Endothelial cell of umbilical vein (primary cell): ENCODE measurements at regions of chr9 and their contacts with region 1.

Region 1: GRCh38 chr9:74952281-74953151 is at the start of gene C9orf40:
- DNase-seq: peak; percentile 86
- H3K4me3 ChIP-seq: peak within 1 kb of the TSS; percentile 60 to 91 (median 61)
- H3K27ac ChIP-seq: peak within 1 kb of the TSS; percentile 54
- H3K4me1 ChIP-seq: peaks cover 4% of the 10 kb centered on the region
- H3K27me3 ChIP-seq: no peaks in the 10 kb centered on the region
- CTCF ChIP-seq: peak; percentile 86 to 93
- POLR2A ChIP-seq: no peak
- total RNA-seq, gene C9orf40: 5.1 and 7.5 TPM in 2 replicates

Region 2: GRCh38 chr9:74887041-74887980 is 65.2 kb before region 1 on chr9 and contains the start of gene TRPM6:
- CTCF ChIA-PET with region 1: interaction called, 10 read pairs
- POLR2A ChIA-PET with region 1: interaction called, 4 read pairs
- dilution Hi-C with region 1: no loop called
- intact Hi-C with region 1: loop called (anchors 2 kb)
- DNase-seq: peak; percentile 48
- H3K4me3 ChIP-seq: peak within 1 kb of the TSS; percentile 51 to 59 (median 53)
- H3K27ac ChIP-seq: no peak within 1 kb of the TSS
- H3K4me1 ChIP-seq: peaks cover 6% of the 10 kb centered on the region
- H3K27me3 ChIP-seq: peaks cover 2 to 12% of the 10 kb centered on the region in 2 experiments
- CTCF ChIP-seq: no peak
- POLR2A ChIP-seq: no peak
- total RNA-seq, gene TRPM6: 0.12 and 0.22 TPM in 2 replicates

Region 3: DNA sequence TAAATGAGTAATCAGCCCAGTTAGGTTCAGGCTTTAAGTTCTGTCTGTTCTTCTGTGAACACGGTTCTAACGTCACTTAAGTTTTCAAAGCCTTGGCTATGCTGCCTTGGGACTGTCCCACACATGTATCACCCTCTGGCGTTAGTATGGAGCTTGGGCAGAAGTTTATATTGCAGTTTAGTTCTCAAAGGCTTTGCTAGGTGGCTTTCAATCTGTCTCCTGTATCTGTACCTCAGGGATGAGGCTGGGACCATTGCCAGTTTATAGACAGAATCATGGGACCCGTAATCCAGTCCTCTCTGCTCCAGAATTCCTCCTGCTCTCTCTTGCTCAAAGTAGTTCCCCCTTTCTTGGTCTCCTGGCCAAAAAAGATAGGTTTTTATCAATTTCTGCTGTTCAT is 11.9 kb before region 1 on chr9:
- CTCF ChIA-PET with region 1: interaction called, 12 read pairs
- POLR2A ChIA-PET with region 1: no interaction called
- dilution Hi-C with region 1: no loop called
- intact Hi-C with region 1: no loop called
- DNase-seq: peak; percentile 10
- H3K4me3 ChIP-seq: no peak overlapping the region
- H3K27ac ChIP-seq: no peak overlapping the region
- H3K4me1 ChIP-seq: peaks cover 6% of the 10 kb centered on the region
- H3K27me3 ChIP-seq: no peaks in the 10 kb centered on the region
- CTCF ChIP-seq: no peak
- POLR2A ChIP-seq: no peak

Region 4: DNA sequence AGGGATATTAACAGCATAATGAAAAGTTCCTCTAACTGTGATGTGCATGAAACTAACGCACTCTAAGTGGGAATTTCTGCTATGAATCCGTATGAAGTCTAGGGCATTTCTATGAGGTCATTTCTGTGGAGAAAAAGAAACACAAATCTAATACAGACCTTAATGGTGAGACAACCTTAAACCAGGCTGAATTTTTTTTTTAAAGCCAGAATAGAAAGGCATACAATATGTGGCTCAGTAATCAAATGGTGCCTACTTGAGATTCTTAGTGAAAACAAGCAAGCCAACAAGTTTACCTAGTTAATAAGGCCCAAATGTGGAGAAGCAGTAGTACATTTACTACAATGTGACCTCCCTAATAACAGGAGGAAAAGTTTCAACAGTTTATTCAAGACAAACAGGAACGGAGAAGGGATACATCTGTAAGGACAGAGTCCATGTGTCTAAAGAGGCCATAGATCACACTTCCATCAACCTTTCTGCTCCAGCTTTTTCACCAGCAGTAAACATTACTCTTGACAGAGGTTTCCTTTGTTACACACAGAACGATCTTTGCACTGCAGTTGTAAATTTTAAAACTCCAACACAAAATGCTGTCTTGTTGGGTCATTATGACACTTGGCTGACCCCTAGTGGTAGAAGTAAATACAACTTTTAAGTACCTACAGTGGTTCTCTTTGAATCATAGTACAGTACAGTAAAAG is 49.4 kb after region 1 on chr9:
- CTCF ChIA-PET with region 1: interaction called, 14 read pairs
- POLR2A ChIA-PET with region 1: no interaction called
- dilution Hi-C with region 1: no loop called
- intact Hi-C with region 1: loop called (anchors 1 kb)
- DNase-seq: peak; percentile 82
- H3K4me3 ChIP-seq: no peak overlapping the region
- H3K27ac ChIP-seq: peak overlapping the region; percentile 18
- H3K4me1 ChIP-seq: peaks cover 2% of the 10 kb centered on the region
- H3K27me3 ChIP-seq: no peaks in the 10 kb centered on the region
- CTCF ChIP-seq: peak; percentile 53 to 56
- POLR2A ChIP-seq: no peak

Region 5: DNA sequence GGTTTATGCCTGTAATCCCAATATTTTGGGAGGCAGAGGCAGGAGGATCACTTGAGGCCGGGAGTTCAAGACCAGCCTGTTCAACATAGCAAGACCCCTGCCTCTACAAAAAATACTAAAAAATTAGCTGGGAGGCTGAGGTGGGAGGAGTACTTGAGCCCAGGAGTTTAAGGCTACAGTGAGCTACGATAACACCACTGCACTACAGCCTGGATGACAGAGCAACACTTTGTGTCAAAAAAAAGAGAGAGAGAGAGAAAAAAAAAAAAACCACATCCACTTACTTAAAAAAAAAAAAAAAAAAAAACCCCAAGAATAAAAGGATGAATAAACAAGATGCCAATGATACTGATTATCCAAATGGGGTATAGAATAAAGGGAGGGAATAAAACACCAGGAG is 61.2 kb after region 1 on chr9:
- CTCF ChIA-PET with region 1: no interaction called
- POLR2A ChIA-PET with region 1: no interaction called
- dilution Hi-C with region 1: no loop called
- intact Hi-C with region 1: no loop called
- DNase-seq: no peak
- H3K4me3 ChIP-seq: no peak overlapping the region
- H3K27ac ChIP-seq: no peak overlapping the region
- H3K4me1 ChIP-seq: no peaks in the 10 kb centered on the region
- H3K27me3 ChIP-seq: no peaks in the 10 kb centered on the region
- CTCF ChIP-seq: no peak
- POLR2A ChIP-seq: no peak

Region 6: DNA sequence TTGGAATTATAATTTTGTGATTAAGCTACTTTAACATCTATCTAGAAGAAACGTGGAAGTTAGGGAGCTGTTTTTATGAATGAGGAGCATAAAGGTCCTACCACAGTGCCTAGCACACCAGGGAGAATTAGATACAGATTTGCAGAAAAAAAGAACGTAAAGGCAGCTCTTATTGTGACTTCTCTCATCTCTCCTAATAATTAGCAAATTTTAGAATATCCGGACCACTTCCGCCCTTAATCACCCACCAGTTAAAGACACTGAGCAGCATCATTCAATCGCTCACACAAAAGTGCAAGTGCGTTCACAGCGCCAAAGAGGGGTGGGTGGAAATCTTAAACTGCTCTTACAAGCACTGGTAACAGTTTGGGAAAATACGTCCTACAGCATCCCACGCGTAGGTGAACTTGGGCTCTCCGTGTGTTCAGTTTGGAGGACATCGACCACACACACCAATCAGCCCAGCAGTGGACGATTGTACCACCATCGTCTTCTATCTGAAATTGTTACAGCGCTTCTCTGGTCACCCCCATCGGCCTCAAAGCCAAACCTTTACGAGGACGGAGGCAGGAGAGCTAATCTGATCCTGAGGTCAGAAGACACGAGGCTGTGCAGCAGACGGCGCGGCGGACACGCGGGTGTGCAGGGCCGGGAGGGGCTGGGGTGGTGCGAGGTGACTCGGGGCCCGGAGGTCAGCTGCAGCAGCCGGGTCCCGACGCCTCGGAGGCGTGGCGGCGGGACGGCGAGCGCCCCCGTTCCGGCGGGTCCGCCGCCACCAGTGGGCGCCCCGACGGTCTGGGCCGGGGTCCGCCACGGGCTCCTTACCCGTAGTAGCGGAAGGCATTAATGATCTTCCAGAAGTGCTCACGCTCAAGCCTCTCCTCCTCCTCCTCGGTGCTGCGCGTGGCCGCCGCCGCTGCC is 74.9 kb after region 1 on chr9:
- CTCF ChIA-PET with region 1: interaction called, 27 read pairs
- POLR2A ChIA-PET with region 1: interaction called, 7 read pairs
- dilution Hi-C with region 1: no loop called
- intact Hi-C with region 1: loop called (anchors 1 kb)
- DNase-seq: peak; percentile 53
- H3K4me3 ChIP-seq: peak overlapping the region; percentile 15 to 68 (median 61)
- H3K27ac ChIP-seq: peak overlapping the region; percentile 43
- H3K4me1 ChIP-seq: peaks cover 9% of the 10 kb centered on the region
- H3K27me3 ChIP-seq: peaks cover 1 to 2% of the 10 kb centered on the region in 2 experiments
- CTCF ChIP-seq: peak in 1 of 2 donors; percentile 21
- POLR2A ChIP-seq: peak; percentile 10

Region 7: DNA sequence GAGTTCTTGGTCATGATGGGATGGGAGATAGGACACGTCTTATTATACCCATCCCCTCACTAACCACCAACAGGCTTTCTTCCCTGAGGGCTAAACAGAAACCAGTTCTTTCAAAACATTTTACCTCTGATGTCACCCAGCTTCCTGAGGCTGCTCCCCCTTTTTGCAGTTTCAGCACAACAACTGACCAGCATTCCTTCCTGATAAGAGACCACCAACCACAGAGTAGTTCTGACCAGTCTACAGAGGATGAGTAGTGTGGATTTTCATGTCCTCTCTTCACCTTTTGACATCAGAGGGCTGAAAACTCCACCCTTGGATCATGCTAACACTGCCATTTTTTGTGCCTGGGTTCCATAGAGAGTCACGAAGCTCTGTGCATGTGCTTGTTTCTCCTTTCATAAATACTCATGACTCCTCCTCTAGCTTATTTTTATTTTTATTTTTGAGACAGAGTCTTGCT is 218.4 kb after region 1 on chr9:
- CTCF ChIA-PET with region 1: interaction called, 4 read pairs
- POLR2A ChIA-PET with region 1: no interaction called
- dilution Hi-C with region 1: no loop called
- intact Hi-C with region 1: loop called (anchors 10 kb)
- DNase-seq: no peak
- H3K4me3 ChIP-seq: no peak overlapping the region
- H3K27ac ChIP-seq: no peak overlapping the region
- H3K4me1 ChIP-seq: peaks cover 33% of the 10 kb centered on the region
- H3K27me3 ChIP-seq: no peaks in the 10 kb centered on the region
- CTCF ChIP-seq: no peak
- POLR2A ChIP-seq: no peak

Region 8: GRCh38 chr9:75233011-75233410 is 280.5 kb after region 1 on chr9:
- CTCF ChIA-PET with region 1: no interaction called
- POLR2A ChIA-PET with region 1: no interaction called
- dilution Hi-C with region 1: no loop called
- intact Hi-C with region 1: no loop called
- DNase-seq: no peak
- H3K4me3 ChIP-seq: no peak overlapping the region
- H3K27ac ChIP-seq: no peak overlapping the region
- H3K4me1 ChIP-seq: no peaks in the 10 kb centered on the region
- H3K27me3 ChIP-seq: no peaks in the 10 kb centered on the region
- CTCF ChIP-seq: no peak
- POLR2A ChIP-seq: no peak

Region 9: DNA sequence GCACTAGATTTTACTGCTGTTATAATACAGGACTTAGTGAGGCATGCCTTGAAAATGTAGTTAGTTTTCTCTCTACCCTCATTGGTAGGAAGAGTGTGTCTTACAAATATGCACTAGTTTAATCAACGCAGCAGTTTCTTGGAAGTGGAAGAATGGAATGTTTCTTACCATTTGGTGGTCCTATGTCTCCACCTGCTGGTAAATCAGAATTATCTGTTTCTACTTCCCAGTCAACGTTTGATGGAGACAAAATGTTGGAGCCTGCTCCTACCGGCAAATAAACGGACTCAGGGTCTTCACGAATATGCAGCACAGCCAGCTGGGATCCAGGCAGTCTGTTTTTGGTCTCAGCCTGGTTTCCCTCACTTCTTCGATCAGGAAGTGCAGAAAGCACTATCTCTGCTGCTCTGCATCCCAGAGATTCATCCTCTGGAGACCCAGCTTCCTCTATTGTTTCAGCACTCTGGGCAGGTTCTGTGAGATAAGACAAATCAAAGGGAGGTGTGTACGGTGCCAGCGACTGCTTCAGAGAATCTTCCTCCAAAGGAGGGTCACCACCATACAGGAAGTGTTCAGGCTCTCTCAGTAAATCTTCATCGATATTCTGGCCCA is 1752.2 kb after region 1 on chr9:
- CTCF ChIA-PET with region 1: no interaction called
- POLR2A ChIA-PET with region 1: no interaction called
- dilution Hi-C with region 1: no loop called
- intact Hi-C with region 1: no loop called
- DNase-seq: peak; percentile 91
- H3K4me3 ChIP-seq: no peak overlapping the region
- H3K27ac ChIP-seq: no peak overlapping the region
- H3K4me1 ChIP-seq: peaks cover 27% of the 10 kb centered on the region
- H3K27me3 ChIP-seq: peaks cover 0 to 15% of the 10 kb centered on the region in 2 experiments
- CTCF ChIP-seq: peak; percentile 30 to 61
- POLR2A ChIP-seq: no peak